RWPE1 (cell line): ENCODE measurements at regions of chr1 and their contacts with region 1.

Region 1: DNA sequence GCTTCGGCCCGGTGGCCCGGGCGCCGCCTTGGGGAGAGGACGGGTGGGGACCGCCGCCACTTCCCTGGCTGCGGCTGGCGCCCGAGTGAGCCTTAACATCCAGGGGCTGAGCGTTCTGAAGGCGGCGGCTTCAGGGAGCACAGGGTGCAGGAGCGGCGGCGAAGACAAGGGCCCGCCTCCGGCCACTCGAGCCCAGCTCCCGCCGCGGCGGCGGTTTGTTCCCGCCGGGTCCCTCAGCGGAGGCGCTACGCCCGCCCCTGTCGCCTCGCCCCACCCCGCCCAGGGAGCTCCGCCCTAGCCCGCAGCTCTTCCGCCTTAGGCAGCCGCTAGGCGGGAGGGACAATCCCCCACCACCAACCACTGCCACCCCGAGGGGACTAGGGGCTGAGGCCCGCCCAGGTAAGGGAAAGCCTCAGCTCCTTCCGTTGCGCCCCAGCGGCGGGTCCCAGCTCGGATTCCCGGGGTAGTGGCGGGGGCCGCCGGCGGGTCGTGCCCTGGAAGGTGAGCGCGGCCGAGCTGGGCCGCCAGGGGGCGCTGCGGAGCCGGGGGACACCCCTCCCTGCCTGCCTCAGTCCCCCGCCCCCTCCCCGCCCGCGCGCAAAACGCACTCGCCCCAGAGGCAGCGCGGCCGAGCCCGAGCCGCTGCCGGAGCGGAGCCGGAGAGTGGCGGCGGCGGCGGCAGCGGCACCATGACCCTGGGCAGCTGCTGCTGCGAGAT is at the start of gene FOXD2:
- DNase-seq: peak; percentile 84
- H3K27ac ChIP-seq: peak within 1 kb of the TSS; percentile 87
- CTCF ChIP-seq: peak; percentile 93

Region 2: DNA sequence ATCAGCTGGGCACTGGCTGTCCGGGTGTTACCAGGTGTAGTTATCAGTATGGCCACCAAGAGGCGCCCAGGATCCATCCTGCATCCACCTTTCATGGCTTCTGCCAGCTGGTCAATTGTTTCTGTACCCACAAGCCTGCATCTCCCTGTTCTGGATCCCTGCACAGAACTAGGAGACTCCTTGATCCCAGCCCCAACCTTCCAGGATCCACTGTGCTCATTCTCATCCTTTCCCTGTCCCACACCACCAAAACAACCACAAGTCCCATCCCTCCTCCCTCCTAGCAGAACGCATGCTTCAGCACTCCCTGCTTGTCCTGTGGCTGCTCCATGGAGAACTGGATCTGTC is 48.7 kb before region 1 on chr1:
- CTCF ChIA-PET with region 1: interaction called, 14 read pairs
- POLR2A ChIA-PET with region 1: no interaction called
- DNase-seq: peak; percentile 78
- H3K27ac ChIP-seq: no peak overlapping the region
- CTCF ChIP-seq: peak; percentile 63

Region 3: GRCh38 chr1:47401761-47402160 is 35.8 kb before region 1 on chr1:
- CTCF ChIA-PET with region 1: interaction called, 3 read pairs
- POLR2A ChIA-PET with region 1: interaction called, 11 read pairs
- DNase-seq: no peak
- H3K27ac ChIP-seq: no peak overlapping the region
- CTCF ChIP-seq: no peak

Region 4: DNA sequence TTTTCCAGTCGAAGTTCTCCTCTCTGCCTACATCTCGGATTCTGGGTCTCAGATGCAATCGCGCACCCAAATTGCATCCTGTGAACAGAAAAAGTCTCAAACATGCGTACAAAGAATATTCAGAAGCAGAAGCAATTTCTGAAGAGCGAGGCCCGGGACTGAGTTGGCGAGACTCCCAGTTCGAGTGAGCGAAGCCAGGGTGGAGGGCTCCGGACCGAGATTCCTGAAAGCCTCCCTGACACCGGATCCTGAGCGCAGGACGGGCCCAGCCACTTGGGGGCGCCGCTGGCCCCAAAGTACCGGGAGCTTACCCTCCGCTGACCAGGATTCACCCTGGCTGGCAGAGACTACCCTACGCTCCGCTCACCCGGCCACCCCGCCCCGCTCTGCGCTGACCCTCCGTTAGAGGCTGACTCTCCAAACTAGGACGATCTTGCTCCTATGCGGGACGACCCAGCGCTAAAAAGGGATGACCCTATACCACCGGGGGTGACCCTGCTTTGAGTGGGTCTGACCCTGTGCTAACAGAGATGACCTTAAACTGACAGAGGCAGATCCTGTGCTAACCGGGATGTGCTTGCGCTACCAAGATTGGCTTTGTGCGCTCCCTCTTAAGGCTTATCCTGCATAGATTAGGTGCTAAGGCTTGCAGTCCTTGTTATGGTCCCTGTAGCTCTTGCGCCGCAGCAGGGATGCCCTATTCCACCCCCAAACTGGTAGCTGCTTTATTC is 12.4 kb after region 1 on chr1:
- CTCF ChIA-PET with region 1: interaction called, 12 read pairs
- POLR2A ChIA-PET with region 1: no interaction called
- DNase-seq: peak; percentile 25
- H3K27ac ChIP-seq: no peak overlapping the region
- CTCF ChIP-seq: no peak; the same call in 1 of the 2 replicates

Region 5: GRCh38 chr1:47495176-47495713 is 57.6 kb after region 1 on chr1:
- CTCF ChIA-PET with region 1: no interaction called
- POLR2A ChIA-PET with region 1: no interaction called
- DNase-seq: no peak
- H3K27ac ChIP-seq: no peak overlapping the region
- CTCF ChIP-seq: no peak

Region 6: GRCh38 chr1:47710329-47711071 is 272.9 kb after region 1 on chr1:
- CTCF ChIA-PET with region 1: interaction called, 56 read pairs
- POLR2A ChIA-PET with region 1: no interaction called
- DNase-seq: peak; percentile 88
- H3K27ac ChIP-seq: no peak overlapping the region
- CTCF ChIP-seq: peak; percentile 96

Region 7: GRCh38 chr1:47725992-47726855 is 288.6 kb after region 1 on chr1:
- CTCF ChIA-PET with region 1: interaction called, 17 read pairs
- POLR2A ChIA-PET with region 1: no interaction called
- DNase-seq: peak; percentile 80
- H3K27ac ChIP-seq: no peak overlapping the region
- CTCF ChIP-seq: peak; percentile 94

Region 8: DNA sequence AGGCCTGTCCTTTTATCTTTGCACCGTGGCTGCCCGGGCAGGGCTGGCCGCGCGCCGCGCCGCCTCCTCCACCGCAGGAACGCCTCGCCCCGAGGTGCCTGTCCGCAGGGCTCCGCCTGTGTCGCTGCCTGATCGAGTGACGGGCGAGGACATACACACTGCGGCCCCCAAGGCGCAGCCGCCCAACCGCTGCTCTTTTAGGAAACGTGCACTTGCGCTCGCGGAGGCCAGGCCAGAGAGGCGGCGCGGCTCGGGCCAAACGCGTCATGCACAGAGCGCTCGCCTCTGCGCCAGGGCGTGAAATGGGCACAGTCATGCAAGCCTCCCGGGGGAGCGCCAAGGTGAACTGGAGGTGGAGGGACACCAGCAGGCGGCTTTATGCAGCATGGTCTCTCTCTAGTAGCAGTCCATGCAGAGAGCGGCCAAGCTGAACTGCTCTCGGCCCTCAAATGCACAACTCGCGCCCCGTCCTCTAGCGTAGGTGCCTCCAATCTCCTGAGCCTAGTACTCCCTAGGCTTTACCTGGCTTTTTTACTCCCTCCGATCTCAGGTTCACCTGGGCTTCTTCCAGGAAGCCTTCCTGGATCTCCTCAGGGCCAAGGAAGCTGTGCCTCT is 546.7 kb after region 1 on chr1:
- CTCF ChIA-PET with region 1: interaction called, 11 read pairs
- POLR2A ChIA-PET with region 1: no interaction called
- DNase-seq: no peak
- H3K27ac ChIP-seq: no peak overlapping the region
- CTCF ChIP-seq: no peak